H1 (cell line): ENCODE measurements at regions of chr1 and their contacts with region 1.

Region 1: DNA sequence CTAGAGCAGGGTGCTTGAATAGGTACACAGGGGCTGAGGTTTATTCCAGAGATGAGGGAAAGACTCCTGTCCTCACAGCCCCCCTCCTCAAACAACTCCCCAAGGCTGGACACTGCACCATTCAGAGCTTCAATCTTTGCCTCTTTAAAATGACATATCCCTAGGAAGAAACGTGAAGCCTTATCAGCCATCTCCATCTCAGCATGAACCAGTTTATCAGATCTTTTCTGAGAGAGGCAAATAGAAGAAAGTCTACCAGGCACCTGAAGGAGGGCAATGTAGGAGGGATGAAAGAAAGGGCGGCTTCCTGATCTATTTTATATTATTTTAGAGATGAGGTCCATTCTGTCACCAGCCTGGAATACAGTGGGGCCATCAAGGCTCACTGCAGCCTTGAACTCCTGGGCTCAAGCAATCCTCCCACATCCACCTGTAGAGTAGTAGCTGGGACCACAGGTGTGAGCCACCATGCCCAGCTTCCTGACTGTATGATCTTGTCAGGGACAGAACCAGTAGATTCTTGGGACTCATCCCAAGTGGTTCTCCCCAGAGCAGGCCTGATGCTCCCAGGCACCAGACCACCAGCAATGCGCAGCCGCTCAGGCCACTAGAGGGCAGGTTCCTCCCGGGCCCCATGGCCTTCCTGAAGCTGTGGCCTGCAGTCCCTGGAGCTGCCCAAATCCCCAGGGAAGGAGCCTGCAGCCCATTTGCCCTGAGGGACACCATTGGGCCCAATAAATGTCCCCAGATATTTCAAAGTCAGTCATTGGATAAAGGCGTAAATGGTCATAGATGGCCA is 44.4 kb upstream of the GOLT1A start:
- DNase-seq: peak; percentile 56 to 93
- H3K4me3 ChIP-seq: no peak overlapping the region
- H3K27ac ChIP-seq: no peak overlapping the region
- H3K4me1 ChIP-seq: peaks cover 14 to 28% (median 21%) of the 10 kb centered on the region in 4 experiments
- H3K27me3 ChIP-seq: no peaks in the 10 kb centered on the region
- CTCF ChIP-seq: peak; percentile 96 to 97 (median 97)
- EP300 ChIP-seq: no peak
- POLR2A ChIP-seq: no peak
- RAD21 ChIP-seq: peak; percentile 89 to 94

Region 2: GRCh38 chr1:204104133-204104871 is 153.9 kb before region 1 on chr1:
- CTCF ChIA-PET with region 1: no interaction called
- POLR2A ChIA-PET with region 1: no interaction called
- DNase-seq: no peak
- H3K4me3 ChIP-seq: no peak overlapping the region
- H3K27ac ChIP-seq: no peak overlapping the region
- H3K4me1 ChIP-seq: peaks cover 27 to 55% (median 36%) of the 10 kb centered on the region in 4 experiments
- H3K27me3 ChIP-seq: no peaks in the 10 kb centered on the region
- CTCF ChIP-seq: no peak
- EP300 ChIP-seq: no peak
- POLR2A ChIP-seq: no peak
- RAD21 ChIP-seq: no peak

Region 3: DNA sequence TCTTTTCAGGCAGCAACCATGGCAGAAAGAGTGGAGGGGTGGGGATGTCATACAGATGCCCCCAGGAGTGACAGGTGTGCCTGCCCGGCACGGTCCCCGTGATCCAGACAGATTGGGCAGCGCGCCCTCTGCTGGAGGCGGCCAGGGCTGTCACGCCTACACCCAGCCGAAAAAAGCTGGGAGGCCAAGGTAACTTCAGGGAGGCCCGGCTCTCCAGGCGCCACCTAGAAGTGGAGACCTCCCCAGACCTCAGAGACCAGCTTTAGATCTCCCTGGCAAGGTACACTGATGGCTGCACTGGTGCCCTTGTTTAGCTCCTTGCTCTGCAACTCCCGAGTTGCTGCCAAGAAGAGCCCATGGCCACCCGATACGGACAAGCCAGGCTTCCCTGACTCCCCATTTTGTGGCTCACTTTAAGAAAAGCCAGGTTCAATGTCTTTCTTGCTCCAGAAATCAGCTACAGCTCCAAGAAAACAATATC is 51.0 kb before region 1 on chr1:
- CTCF ChIA-PET with region 1: interaction called, 15 read pairs
- POLR2A ChIA-PET with region 1: no interaction called
- DNase-seq: peak; percentile 41 to 100
- H3K4me3 ChIP-seq: no peak overlapping the region
- H3K27ac ChIP-seq: no peak overlapping the region
- H3K4me1 ChIP-seq: peaks cover 0 to 2% (median 2%) of the 10 kb centered on the region in 4 experiments; a peak in 4 of 7 replicates
- H3K27me3 ChIP-seq: no peaks in the 10 kb centered on the region
- CTCF ChIP-seq: peak; percentile 96 to 98 (median 96)
- EP300 ChIP-seq: no peak
- POLR2A ChIP-seq: no peak
- RAD21 ChIP-seq: peak; percentile 72 to 81

Region 4: GRCh38 chr1:204225841-204226735 is 32.1 kb before region 1 on chr1:
- CTCF ChIA-PET with region 1: interaction called, 59 read pairs
- POLR2A ChIA-PET with region 1: interaction called, 3 read pairs
- DNase-seq: no peak
- H3K4me3 ChIP-seq: no peak overlapping the region
- H3K27ac ChIP-seq: no peak overlapping the region
- H3K4me1 ChIP-seq: 0 out of 7 replicates have a peak, but pooled peaks cover 0 to 2% (median 0%) of the 10 kb centered on the region in 4 experiments
- H3K27me3 ChIP-seq: no peaks in the 10 kb centered on the region
- CTCF ChIP-seq: no peak
- EP300 ChIP-seq: no peak
- POLR2A ChIP-seq: no peak
- RAD21 ChIP-seq: no peak

Region 5: DNA sequence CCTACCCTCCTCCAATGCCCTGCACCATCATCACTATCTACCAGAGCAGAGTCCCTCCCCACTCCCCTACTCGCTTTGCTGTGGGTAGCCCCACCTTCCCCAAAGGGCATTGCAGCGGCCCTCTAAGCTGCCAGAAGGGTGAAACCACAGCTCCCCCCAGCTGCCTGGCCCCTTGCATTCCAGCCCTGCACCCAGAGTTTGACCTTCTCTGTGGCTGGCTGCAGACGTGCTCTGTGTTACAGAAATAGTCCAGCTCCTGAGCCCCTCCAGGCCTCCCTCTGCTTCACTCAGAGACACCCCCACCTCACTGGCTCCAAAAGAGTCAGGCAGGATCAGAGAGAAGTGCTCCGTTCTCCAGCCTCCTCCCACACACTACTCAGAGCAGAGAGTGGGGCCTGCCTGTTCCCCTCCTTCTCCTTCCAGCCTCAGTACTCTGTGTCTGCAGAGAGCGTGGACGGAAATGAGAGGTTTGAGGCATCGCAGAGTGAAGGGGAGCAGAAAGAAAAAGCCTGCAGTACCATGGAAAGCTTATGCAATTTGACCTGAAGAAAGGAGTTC is 38.4 kb after region 1 on chr1:
- CTCF ChIA-PET with region 1: interaction called, 335 read pairs
- POLR2A ChIA-PET with region 1: no interaction called
- DNase-seq: no peak
- H3K4me3 ChIP-seq: no peak overlapping the region
- H3K27ac ChIP-seq: no peak overlapping the region
- H3K4me1 ChIP-seq: peaks cover 0 to 13% (median 5%) of the 10 kb centered on the region in 4 experiments; a peak in 5 of 7 replicates
- H3K27me3 ChIP-seq: no peaks in the 10 kb centered on the region
- CTCF ChIP-seq: peak in 2 of 3 experiments; percentile 24 to 26; a peak in 2 of 4 replicates
- EP300 ChIP-seq: no peak
- POLR2A ChIP-seq: no peak
- RAD21 ChIP-seq: peak; percentile 25 to 56

Region 6: DNA sequence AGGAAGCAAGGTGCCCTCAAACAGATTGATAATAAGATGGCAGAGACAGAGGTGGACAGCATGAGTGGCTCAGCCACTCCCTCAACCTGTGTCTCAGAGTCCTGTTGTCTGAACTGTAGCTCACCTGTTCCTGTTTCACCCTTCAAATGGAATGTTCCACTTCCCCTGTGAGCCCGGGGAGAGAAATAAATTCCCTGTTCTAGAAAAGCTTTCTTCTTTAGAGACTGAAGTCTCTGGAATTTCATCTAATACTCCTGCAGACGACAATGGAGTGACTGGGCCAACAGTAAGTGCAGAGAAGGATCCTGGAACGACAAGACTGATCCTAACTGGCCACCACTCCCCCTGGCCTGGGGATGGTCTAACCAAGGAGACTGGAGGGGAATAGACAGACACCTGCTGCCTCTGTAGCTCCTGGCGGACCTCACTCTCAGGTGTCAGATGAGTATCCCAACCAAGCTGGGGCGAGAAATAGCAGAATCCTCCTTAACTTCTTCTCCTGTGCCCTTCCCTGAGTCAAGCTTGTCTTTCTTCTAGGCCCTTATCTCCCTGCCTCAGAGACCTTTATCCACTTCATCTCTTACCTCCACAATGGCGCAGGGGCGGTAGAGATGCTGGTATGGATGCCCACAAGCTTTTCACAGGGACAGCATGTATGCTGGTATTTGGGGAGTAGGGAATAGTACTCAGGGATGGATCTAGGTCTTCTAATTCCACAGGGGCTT is 56.2 kb after region 1 on chr1:
- CTCF ChIA-PET with region 1: interaction called, 31 read pairs
- POLR2A ChIA-PET with region 1: no interaction called
- DNase-seq: peak in 1 of 2 experiments; percentile 67
- H3K4me3 ChIP-seq: no peak overlapping the region
- H3K27ac ChIP-seq: 0 out of 2 replicates have a peak overlapping the region, but pooled peaks have one; percentile 33
- H3K4me1 ChIP-seq: peaks cover 3 to 20% (median 11%) of the 10 kb centered on the region in 4 experiments; a peak in 6 of 7 replicates
- H3K27me3 ChIP-seq: no peaks in the 10 kb centered on the region; a peak in 2 of 7 replicates
- CTCF ChIP-seq: no peak
- EP300 ChIP-seq: peak in 1 of 2 experiments; percentile 99; a peak in 2 of 3 replicates
- POLR2A ChIP-seq: no peak
- RAD21 ChIP-seq: no peak

Region 7: DNA sequence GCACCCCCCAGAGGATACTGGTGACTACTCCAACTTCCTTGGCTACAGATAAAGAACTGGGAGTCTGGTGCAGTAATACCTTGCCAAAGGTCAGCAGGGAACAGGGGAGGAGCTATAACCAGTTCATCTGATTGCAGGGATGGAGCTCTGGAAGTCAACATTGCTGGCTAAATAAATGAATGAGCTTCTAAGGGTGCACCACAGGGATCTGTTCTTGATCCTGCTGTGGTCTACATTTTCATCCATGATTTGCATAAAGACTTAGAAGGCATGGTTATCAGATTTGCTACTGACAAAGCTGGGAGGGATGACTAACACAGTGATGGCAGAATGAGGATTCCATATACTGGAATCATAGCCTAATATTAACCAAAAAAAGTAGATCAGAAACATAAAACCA is 83.2 kb after region 1 on chr1:
- CTCF ChIA-PET with region 1: interaction called, 33 read pairs
- POLR2A ChIA-PET with region 1: interaction called, 3 read pairs
- DNase-seq: no peak
- H3K4me3 ChIP-seq: no peak overlapping the region
- H3K27ac ChIP-seq: no peak overlapping the region
- H3K4me1 ChIP-seq: peaks cover 17 to 36% (median 32%) of the 10 kb centered on the region in 4 experiments
- H3K27me3 ChIP-seq: peaks cover 0 to 2% (median 0%) of the 10 kb centered on the region in 4 experiments; a peak in 3 of 7 replicates
- CTCF ChIP-seq: no peak
- EP300 ChIP-seq: no peak
- POLR2A ChIP-seq: no peak
- RAD21 ChIP-seq: no peak